ENCODE measurements at regions of chr3 and their contacts with region 1.

Region 1: DNA sequence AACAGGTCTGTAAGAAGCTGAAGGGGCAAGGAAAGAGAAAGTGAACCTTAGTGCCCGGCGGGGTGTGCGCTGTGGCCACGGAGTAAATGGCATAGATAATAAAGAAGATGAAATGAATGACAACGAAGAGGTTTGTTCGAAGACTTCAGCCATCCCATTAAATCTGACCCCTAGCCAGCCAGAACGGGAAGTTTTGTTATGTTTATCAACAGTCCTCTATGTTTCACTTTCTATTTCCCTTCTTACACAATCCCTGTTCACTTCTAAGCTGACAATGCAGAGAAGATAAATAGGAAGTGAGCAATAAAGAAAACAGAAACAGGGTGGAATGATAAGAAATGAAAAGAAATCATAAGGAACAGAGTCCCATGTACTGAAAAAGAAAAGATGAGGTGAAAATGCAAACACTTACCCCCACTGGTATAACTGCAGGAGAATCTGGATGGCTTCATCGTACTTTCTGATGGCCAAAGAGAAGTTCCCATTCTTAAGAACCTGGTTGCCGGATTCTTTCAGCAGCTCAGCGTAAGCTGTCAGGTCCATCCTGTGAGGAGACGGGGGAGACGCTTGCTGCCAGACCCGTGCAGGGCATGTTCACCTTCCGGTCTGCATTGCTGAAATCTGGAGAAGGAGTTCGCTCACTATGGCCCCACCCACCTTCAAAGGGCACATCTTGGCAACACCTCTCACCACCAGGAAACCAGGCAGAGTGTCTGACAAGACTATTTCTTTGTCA is 36.8 kb downstream of the TRANK1 start:
- DNase-seq: peak; percentile 86
- H3K4me3 ChIP-seq: peak overlapping the region; percentile 26 to 58 (median 50)
- H3K27ac ChIP-seq: peak overlapping the region; percentile 81 to 89 (median 83)
- H3K4me1 ChIP-seq: peaks cover 0 to 38% (median 25%) of the 10 kb centered on the region in 4 donors
- H3K27me3 ChIP-seq: no peaks in the 10 kb centered on the region
- CTCF ChIP-seq: peak in 1 of 5 experiments; percentile 9
- EP300 ChIP-seq: no peak
- POLR2A ChIP-seq: peak; percentile 72

Region 2: GRCh38 chr3:36957862-36958686 is 50.0 kb after region 1 on chr3:
- in situ Hi-C with region 1: loop called in 1 of 4 experiments (anchors 5 kb)
- intact Hi-C with region 1: no loop called
- DNase-seq: peak; percentile 20
- H3K4me3 ChIP-seq: peak overlapping the region in 1 of 4 donors; percentile 11
- H3K27ac ChIP-seq: peak overlapping the region in 3 of 4 donors; percentile 22 to 64 (median 54)
- H3K4me1 ChIP-seq: peaks cover 0 to 40% (median 4%) of the 10 kb centered on the region in 4 donors
- H3K27me3 ChIP-seq: no peaks in the 10 kb centered on the region
- CTCF ChIP-seq: no peak
- EP300 ChIP-seq: no peak
- POLR2A ChIP-seq: no peak

Measured in transverse colon (tissue), 4 donors.